Activated CD4-positive, alpha-beta memory T cell treated with anti-CD3 and anti-CD28 coated beads, Interleukin-2, amount 10 ng/mL, durations not matched to agents 7 days and 5 days (primary cell): ENCODE measurements at regions of chr2 and their contacts with region 1.

Region 1: DNA sequence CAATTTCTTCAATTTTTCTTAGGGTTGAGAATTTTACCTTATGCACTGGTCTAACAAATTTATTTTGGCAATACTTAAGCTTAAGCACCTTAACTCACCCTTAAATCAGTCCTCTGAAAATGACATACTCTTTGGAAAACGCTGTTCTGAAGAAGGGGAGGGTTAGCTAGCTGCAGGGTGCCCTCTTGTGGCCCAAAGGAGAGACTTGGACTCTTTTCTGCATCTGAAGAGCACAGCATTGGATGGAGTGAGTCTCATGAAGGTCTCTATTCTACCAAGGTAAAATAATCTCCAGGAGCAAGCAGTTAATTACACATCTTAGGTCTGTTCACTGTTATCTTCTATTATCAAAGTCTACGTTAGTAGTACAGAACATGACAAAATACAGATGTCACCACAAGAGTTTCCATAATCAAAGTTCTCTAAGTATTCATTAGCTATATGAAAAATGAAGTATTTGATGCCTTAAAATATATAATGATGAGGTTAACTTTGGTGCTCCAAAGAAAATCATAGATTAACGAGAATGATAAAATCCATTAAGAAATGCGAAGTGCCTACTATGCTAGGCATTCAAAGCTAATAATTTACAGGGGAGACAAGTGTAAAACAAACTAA is 24.4 kb downstream of the PUM2 start:
- DNase-seq: peak; percentile 55
- H3K4me3 Mint-ChIP-seq: no peak overlapping the region
- H3K27ac Mint-ChIP-seq: peak overlapping the region; percentile 6
- H3K4me1 Mint-ChIP-seq: peaks cover 61% of the 10 kb centered on the region
- H3K27me3 Mint-ChIP-seq: no peaks in the 10 kb centered on the region

Region 2: DNA sequence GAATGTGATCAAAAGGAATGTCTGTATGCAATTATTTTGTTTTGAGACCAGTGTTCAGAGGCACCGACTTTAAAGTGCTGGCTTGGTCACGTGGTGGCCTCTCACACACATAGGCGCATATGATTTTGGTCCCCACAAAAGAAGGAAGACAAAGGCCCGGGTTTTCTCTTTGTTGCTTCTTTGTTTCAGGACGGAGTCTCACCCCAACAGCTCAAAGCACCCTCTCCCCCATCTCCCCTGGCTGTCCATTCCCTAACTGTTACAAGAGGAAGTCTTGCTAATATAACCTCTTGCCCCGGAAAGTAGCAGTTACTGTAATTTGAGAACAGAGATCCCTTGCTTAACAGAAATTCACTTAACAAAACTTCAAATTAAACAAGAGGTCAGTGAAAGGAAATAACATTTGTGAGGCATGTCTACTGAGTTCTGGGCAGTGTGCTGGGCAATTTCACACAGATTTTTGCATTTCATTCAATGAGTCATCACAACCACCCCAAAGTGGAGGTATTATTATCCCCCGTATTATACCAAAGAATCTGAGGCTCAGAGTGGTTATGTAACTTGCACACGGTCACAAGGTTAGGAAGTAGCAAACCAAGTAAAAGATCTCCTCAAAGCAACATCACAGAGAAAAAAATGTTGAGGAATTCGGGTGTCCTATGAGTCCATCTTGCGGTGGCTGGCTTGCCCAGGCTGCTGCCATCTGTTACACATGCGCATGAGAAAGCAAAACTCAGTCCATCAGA is 177.2 kb before region 1 on chr2:
- CTCF ChIA-PET with region 1: no interaction called
- POLR2A ChIA-PET with region 1: no interaction called
- DNase-seq: no peak
- H3K4me3 Mint-ChIP-seq: no peak overlapping the region
- H3K27ac Mint-ChIP-seq: no peak overlapping the region
- H3K4me1 Mint-ChIP-seq: peaks cover 2% of the 10 kb centered on the region
- H3K27me3 Mint-ChIP-seq: peaks cover 31% of the 10 kb centered on the region

Region 3: GRCh38 chr2:20291106-20291564 is 35.1 kb before region 1 on chr2:
- CTCF ChIA-PET with region 1: interaction called, 13 read pairs
- POLR2A ChIA-PET with region 1: no interaction called
- DNase-seq: peak; percentile 21
- H3K4me3 Mint-ChIP-seq: no peak overlapping the region
- H3K27ac Mint-ChIP-seq: no peak overlapping the region
- H3K4me1 Mint-ChIP-seq: peaks cover 13% of the 10 kb centered on the region
- H3K27me3 Mint-ChIP-seq: no peaks in the 10 kb centered on the region

Region 4: GRCh38 chr2:20304411-20304810 is 21.9 kb before region 1 on chr2:
- CTCF ChIA-PET with region 1: interaction called, 10 read pairs
- POLR2A ChIA-PET with region 1: interaction called, 4 read pairs
- DNase-seq: no peak
- H3K4me3 Mint-ChIP-seq: no peak overlapping the region
- H3K27ac Mint-ChIP-seq: no peak overlapping the region
- H3K4me1 Mint-ChIP-seq: no peaks in the 10 kb centered on the region
- H3K27me3 Mint-ChIP-seq: no peaks in the 10 kb centered on the region

Region 5: GRCh38 chr2:20343128-20343527 is 16.9 kb after region 1 on chr2:
- CTCF ChIA-PET with region 1: interaction called, 33 read pairs
- POLR2A ChIA-PET with region 1: interaction called, 6 read pairs
- DNase-seq: no peak
- H3K4me3 Mint-ChIP-seq: no peak overlapping the region
- H3K27ac Mint-ChIP-seq: no peak overlapping the region
- H3K4me1 Mint-ChIP-seq: peaks cover 67% of the 10 kb centered on the region
- H3K27me3 Mint-ChIP-seq: no peaks in the 10 kb centered on the region

Region 6: DNA sequence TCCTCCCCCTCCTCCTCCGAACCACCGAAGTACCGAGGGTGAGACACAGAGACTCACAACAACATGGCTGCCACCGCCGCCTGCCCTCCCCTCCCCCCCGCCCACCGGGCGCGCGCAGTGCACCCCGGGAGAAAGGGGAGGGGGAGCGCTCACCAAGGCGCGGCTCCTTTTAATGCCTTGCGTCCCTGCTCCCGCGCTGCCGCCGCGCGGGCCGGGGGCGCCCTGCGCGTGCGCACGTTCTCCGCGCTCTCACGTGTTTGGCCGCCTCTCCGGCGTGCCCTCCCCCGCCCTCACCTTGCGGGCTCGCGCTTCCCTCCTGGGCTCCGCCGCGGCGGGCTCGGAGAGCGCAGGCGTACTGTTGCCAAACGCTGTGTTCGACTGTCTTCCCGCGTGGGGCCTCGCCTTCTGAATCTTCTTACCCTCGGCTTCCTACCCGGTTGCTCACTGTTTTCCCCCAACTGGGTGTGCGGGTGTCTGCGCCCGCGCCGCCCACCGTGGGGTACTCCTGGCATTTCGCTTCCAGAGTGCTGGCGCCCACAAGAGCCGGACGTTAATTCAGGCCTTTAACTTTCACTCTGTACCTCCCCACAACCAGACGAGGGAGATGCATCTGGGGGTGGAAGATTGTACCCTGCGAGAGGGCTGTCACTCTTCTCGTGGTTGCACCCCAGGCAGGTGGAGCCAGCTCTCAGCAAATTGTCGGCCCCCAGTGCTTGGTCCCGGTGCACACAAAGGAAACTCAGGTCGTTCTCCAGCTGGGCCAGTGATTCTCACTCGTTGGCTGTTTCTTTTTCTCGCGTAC is 24.7 kb after region 1 on chr2 and contains the start of gene PUM2:
- CTCF ChIA-PET with region 1: interaction called, 21 read pairs
- POLR2A ChIA-PET with region 1: interaction called, 6 read pairs
- DNase-seq: peak; percentile 97
- H3K4me3 Mint-ChIP-seq: no peak within 1 kb of the TSS
- H3K27ac Mint-ChIP-seq: peak within 1 kb of the TSS; percentile 80
- H3K4me1 Mint-ChIP-seq: peaks cover 38% of the 10 kb centered on the region
- H3K27me3 Mint-ChIP-seq: no peaks in the 10 kb centered on the region
- total RNA-seq, gene PUM2: 141 to 147 TPM

Region 7: GRCh38 chr2:20424300-20425290 is 98.3 kb after region 1 on chr2:
- CTCF ChIA-PET with region 1: interaction called, 21 read pairs
- POLR2A ChIA-PET with region 1: no interaction called
- DNase-seq: peak; percentile 58
- H3K4me3 Mint-ChIP-seq: peak overlapping the region; percentile 3
- H3K27ac Mint-ChIP-seq: peak overlapping the region; percentile 68
- H3K4me1 Mint-ChIP-seq: peaks cover 44% of the 10 kb centered on the region
- H3K27me3 Mint-ChIP-seq: peaks cover 4% of the 10 kb centered on the region

Region 8: DNA sequence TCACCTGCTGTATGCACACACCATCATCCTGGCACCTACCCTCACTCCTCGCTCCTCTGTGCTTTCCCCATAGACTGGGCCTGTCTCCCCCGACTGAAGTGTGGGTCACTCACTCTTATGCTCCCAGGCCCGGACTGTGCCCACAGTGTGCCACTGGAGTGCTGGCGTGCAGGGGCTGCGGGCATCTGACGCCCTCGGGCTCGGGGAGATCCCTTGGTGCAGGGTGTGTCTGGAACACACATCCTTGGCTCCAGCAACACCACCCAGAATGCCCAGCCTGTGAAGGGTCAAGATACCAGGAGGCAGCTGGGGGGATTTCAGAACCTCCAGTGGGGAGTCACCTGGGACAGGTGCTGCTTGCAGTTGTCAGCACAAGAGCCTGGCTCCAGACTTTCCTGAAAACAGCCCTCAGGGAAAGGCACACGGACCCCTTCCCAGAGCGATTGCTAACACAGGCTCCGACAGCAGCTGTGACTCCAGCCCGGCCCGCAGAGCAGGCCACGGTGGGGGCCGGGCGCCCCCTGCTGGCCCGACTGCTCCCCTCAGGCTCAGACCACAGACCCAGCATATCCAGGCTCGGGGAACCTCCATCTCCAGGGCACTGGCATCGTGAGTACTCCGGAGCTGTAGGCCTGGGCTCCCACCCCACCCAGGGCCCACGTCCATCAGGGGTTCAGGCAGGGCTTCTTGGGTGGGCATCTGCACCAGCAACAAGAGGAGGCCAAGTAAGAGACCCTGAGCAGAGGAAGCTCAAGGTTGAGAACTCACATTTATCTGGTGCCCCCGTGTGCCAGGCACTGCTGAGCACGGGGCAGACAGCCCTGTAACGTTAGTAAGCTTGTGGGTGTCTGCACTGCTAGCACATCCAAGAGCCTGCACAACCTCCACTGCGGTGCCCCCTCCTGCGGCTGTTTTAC is 316.0 kb after region 1 on chr2:
- CTCF ChIA-PET with region 1: interaction called, 12 read pairs
- POLR2A ChIA-PET with region 1: interaction called, 3 read pairs
- DNase-seq: peak; percentile 79
- H3K4me3 Mint-ChIP-seq: no peak overlapping the region
- H3K27ac Mint-ChIP-seq: no peak overlapping the region
- H3K4me1 Mint-ChIP-seq: no peaks in the 10 kb centered on the region
- H3K27me3 Mint-ChIP-seq: no peaks in the 10 kb centered on the region